ENCODE measurements at regions of chr14 and their contacts with region 1.

Region 1: GRCh38 chr14:22852940-22853767 is 16.8 kb downstream of the MMP14 start:
- DNase-seq: peak; percentile 93
- ATAC-seq: peak; percentile 51

Region 2: DNA sequence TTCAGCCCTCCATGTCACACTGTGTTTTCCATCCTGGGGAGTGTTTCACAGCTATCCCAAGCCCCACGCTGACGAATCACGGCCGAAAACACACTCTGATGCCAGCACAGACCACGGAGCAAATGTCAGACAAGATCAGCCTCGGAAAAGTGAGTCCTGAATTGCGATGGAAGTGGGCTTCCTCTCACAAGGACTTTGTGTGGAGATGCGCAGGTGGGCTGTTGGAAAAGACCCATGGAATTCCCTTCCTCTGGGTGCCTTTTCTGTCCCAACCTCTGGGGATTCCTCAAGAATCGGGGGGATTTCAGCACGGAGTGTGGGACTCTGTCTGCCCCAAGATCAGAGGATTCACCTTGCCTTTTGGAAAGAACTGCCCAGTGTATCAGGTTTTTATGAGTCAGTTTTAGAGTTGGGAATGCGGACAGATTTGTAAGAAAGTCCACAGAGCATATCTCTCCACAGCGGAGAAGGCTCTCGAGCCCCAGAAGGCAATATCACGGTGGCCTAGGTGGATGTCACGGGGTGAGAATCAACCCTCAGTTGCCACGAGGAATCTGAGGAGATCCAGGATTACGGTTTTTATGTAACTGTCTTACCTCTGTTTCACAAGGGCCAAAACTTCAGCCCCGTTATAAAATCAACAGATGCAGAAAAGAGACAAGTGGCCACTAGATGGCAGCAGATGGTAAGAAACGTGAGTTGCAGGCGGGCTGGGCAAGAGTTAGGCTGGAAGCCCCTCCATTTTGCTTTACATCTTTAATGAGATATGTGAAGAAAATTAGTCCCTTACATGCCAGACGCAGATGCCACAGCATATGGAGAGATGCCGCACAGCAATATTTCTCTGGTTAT is 466.0 kb before region 1 on chr14:
- intact Hi-C with region 1: loop called (anchors 5 kb)
- DNase-seq: peak; percentile 67
- ATAC-seq: peak; percentile 35

Region 3: GRCh38 chr14:22556990-22557623 is 296.0 kb before region 1 on chr14:
- intact Hi-C with region 1: loop called (anchors 2 kb)
- DNase-seq: peak; percentile 84
- ATAC-seq: peak; percentile 88

Region 4: GRCh38 chr14:22570132-22570949 is 282.8 kb before region 1 on chr14:
- intact Hi-C with region 1: loop called (anchors 1 kb)
- DNase-seq: no peak
- ATAC-seq: peak; percentile 72

Region 5: GRCh38 chr14:22653012-22653621 is 200.0 kb before region 1 on chr14:
- intact Hi-C with region 1: loop called (anchors 1 kb)
- DNase-seq: no peak
- ATAC-seq: peak; percentile 53

Region 6: DNA sequence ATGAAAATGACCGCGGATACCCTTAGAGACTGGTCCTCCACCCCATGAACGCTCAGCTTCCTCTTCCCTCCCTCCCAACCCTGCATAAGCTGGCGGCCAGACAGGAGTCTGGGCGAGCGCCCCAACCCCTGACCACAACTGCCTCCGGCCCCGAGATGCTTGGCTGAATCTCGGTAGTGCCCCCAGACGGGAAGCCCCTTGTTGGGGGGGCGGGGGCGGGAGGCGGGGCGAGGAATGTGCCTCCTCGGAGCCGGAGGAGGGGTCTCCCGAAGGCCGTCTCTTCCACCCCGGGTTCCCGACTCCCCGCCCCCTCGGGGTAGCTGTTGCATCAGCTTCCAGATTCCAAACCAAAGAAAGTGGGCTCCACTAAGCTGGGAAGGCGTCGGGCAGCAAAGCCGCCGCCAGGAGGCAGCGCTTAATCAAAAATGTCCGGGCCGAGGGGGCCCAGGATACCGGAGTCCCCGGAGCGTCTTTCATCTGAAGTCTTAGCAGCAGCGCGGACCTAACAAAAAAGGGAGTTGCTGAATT is 30.5 kb before region 1 on chr14:
- intact Hi-C with region 1: loop called (anchors 1 kb)
- DNase-seq: peak; percentile 86
- ATAC-seq: peak; percentile 86

Region 7: DNA sequence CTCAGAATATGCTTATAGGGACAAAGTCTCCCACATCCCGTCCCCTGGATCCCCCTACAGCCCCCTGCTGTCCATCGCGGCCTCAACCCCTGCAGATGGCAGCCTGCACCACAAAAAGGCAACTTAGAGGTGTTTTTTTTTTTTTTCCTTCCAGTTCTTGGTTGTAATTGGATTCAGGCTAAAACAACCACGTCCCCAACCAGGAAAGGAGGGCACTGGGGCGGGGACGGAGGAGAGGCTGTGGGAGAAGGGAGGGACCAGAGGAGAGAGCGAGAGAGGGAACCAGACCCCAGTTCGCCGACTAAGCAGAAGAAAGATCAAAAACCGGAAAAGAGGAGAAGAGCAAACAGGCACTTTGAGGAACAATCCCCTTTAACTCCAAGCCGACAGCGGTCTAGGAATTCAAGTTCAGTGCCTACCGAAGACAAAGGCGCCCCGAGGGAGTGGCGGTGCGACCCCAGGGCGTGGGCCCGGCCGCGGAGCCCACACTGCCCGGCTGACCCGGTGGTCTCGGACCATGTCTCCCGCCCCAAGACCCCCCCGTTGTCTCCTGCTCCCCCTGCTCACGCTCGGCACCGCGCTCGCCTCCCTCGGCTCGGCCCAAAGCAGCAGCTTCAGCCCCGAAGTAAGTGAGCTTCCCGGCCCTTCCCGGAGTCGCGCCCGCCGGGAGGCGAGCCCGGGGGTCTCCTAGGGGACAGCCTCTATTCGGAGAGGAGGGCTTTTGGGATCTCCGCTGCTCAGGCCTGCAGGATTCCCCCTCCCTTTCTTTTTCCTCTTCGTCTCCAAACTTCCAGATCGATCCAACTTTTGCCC is 16.6 kb before region 1 on chr14 and contains the start of gene MMP14:
- intact Hi-C with region 1: loop called (anchors 2 kb)
- DNase-seq: peak; percentile 85
- ATAC-seq: peak; percentile 79
- total RNA-seq, gene MMP14: 26.0 TPM

Region 8: GRCh38 chr14:22955702-22956569 is 102.8 kb after region 1 on chr14:
- intact Hi-C with region 1: no loop called
- DNase-seq: no peak
- ATAC-seq: no peak